SK-N-SH (cell line): ENCODE measurements at regions of chr17 and their contacts with region 1.

Region 1: DNA sequence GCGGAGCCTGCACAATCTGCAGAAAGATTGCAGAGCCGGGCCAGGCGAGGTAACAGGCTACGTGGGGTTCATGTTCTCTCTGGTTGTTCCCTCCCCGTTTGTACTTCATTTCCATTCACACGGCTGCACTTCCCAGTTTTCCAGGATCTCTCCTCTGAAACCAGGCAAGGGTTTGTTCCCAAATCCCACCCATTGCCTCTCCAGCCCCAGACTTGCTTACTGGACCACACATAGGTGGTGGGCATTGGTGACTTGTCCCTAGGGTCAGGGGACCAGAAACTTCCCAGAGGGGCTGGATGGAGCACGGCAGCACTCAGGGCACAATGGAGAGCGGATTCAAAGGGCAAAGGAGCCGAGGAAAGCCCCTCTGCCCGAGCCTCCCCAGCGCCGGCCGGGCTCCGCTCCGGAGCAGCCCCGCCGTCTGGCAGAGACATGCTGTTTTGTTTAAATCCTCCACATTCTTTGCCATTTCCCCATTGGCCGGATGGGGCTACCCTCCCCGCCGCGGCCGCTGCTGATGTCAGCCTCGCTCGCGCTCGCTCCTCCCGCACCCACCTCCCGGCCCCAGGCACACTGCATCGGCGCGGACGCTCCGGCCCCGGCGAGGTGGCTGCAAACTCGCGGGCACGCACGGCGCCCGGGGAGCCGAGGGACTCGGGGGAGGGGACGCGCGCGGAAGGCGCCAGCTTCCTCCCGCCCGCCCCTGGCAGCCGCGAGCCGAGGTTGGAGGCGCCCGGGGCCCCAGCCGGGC is at the start of gene PITPNC1:
- DNase-seq: peak; percentile 94
- H3K4me3 ChIP-seq: peak within 1 kb of the TSS; percentile 74 to 95
- H3K27ac ChIP-seq: peak within 1 kb of the TSS; percentile 97 to 98
- H3K4me1 ChIP-seq: peaks cover 16 to 21% of the 10 kb centered on the region in 2 experiments; a peak in 3 of 4 replicates
- H3K27me3 ChIP-seq: no peaks in the 10 kb centered on the region
- CTCF ChIP-seq: no peak
- EP300 ChIP-seq: no peak; a peak in 1 of 4 replicates
- RAD21 ChIP-seq: 0 out of 2 replicates have a peak, but pooled peaks have one; percentile 16
- polyA plus RNA-seq, gene PITPNC1: 14.0 and 18.4 TPM in 2 replicates

Region 2: DNA sequence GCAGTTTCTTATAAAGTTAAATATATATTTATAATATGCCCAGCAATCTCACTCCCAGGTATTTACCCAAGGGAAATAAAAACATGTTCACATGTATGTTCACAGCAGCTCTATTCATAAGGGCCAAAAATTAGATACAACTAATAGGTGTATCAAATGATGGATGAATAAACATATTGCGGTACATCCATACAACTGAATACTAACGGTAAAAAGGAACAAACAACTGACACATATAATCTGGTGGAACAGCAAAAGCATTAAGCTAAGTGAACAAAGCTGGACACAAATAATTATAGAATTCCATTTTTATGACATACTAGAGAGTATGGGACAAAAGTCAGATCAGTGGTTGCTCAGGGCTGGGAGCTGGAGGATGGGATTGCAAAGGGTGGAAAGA is 257.8 kb before region 1 on chr17:
- CTCF ChIA-PET with region 1: no interaction called
- POLR2A ChIA-PET with region 1: no interaction called
- DNase-seq: no peak
- H3K4me3 ChIP-seq: no peak overlapping the region
- H3K27ac ChIP-seq: no peak overlapping the region
- H3K4me1 ChIP-seq: peaks cover 0 to 16% of the 10 kb centered on the region in 2 experiments; a peak in 2 of 4 replicates
- H3K27me3 ChIP-seq: no peaks in the 10 kb centered on the region
- CTCF ChIP-seq: no peak
- EP300 ChIP-seq: no peak
- RAD21 ChIP-seq: no peak

Region 3: DNA sequence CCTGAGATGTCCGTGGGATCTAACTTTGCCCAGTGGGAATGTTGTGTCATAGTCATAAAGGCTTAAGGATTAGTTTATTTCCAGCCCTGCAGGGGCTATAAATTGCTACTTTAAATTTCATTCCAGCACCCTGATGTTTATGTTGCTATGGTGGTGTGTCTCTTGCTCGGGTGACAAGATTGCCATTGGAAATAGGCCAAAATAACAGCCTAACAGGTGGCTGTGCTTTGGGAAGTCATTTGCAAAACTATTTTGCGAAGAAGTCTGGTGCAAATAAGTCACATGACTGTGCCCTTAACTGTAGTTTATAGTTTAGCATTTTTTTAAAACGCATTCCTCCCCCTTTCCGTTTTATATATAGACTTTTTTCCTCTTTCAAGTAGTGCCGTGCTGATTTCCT is 23.3 kb after region 1 on chr17:
- CTCF ChIA-PET with region 1: interaction called, 11 read pairs
- POLR2A ChIA-PET with region 1: no interaction called
- DNase-seq: no peak
- H3K4me3 ChIP-seq: no peak overlapping the region
- H3K27ac ChIP-seq: no peak overlapping the region
- H3K4me1 ChIP-seq: peaks cover 6% of the 10 kb centered on the region in 2 experiments; a peak in 2 of 4 replicates
- H3K27me3 ChIP-seq: no peaks in the 10 kb centered on the region
- CTCF ChIP-seq: no peak
- EP300 ChIP-seq: no peak
- RAD21 ChIP-seq: no peak

Region 4: DNA sequence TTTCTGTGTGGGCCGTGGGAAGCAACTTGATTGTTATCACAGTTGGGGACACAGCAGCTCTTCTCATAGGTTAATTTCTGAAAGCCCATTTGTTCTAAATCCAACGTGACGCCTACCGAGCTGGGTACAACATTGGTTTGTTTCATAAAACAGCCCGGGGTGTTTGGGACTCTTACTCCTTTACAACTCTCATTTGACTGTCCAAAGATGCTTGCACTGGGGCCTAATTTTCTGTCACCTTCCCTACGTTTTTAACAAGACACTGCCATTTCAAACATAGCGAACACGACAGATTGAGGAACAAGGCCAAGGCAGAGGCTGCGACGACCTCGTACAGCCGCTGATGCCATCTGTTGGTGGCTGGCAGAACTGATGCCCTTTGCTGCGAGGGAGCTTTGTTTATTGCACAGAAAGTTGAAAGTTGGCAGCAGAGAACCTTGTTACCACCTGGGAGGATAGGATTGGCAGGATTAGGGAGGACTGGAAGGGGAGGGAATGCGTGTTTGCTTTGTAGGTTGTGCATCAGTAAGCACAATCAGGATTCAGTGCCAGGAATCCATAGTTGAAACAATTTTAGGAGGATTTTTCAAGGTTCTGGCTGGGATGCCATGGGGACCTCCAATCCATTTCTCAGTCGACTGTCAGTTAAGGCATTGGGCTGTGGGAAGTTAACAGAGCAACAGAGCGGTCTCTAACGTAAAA is 98.5 kb after region 1 on chr17:
- CTCF ChIA-PET with region 1: interaction called, 284 read pairs
- POLR2A ChIA-PET with region 1: interaction called, 13 read pairs
- DNase-seq: peak; percentile 84
- H3K4me3 ChIP-seq: no peak overlapping the region
- H3K27ac ChIP-seq: peak overlapping the region; percentile 11 to 42; a peak in 2 of 4 replicates
- H3K4me1 ChIP-seq: peaks cover 4 to 14% of the 10 kb centered on the region in 2 experiments; a peak in 3 of 4 replicates
- H3K27me3 ChIP-seq: no peaks in the 10 kb centered on the region
- CTCF ChIP-seq: peak; percentile 99
- EP300 ChIP-seq: no peak
- RAD21 ChIP-seq: peak; percentile 100

Region 5: GRCh38 chr17:67602956-67603355 is 226.0 kb after region 1 on chr17:
- CTCF ChIA-PET with region 1: interaction called, 74 read pairs
- POLR2A ChIA-PET with region 1: interaction called, 9 read pairs
- DNase-seq: peak; percentile 42
- H3K4me3 ChIP-seq: no peak overlapping the region
- H3K27ac ChIP-seq: no peak overlapping the region
- H3K4me1 ChIP-seq: peaks cover 24 to 33% of the 10 kb centered on the region in 2 experiments
- H3K27me3 ChIP-seq: no peaks in the 10 kb centered on the region
- CTCF ChIP-seq: peak; percentile 57
- EP300 ChIP-seq: no peak
- RAD21 ChIP-seq: peak; percentile 85

Region 6: GRCh38 chr17:67647482-67647881 is 270.6 kb after region 1 on chr17:
- CTCF ChIA-PET with region 1: interaction called, 13 read pairs
- POLR2A ChIA-PET with region 1: no interaction called
- DNase-seq: no peak
- H3K4me3 ChIP-seq: no peak overlapping the region
- H3K27ac ChIP-seq: no peak overlapping the region
- H3K4me1 ChIP-seq: peaks cover 0 to 7% of the 10 kb centered on the region in 2 experiments; a peak in 1 of 4 replicates
- H3K27me3 ChIP-seq: no peaks in the 10 kb centered on the region
- CTCF ChIP-seq: no peak
- EP300 ChIP-seq: no peak
- RAD21 ChIP-seq: no peak

Region 7: GRCh38 chr17:67707442-67707841 is 330.5 kb after region 1 on chr17:
- CTCF ChIA-PET with region 1: interaction called, 27 read pairs
- POLR2A ChIA-PET with region 1: no interaction called
- DNase-seq: peak; percentile 34
- H3K4me3 ChIP-seq: no peak overlapping the region
- H3K27ac ChIP-seq: peak overlapping the region in 1 of 2 experiments; percentile 16; a peak in 2 of 4 replicates
- H3K4me1 ChIP-seq: peaks cover 0 to 3% of the 10 kb centered on the region in 2 experiments; a peak in 1 of 4 replicates
- H3K27me3 ChIP-seq: no peaks in the 10 kb centered on the region
- CTCF ChIP-seq: no peak
- EP300 ChIP-seq: no peak
- RAD21 ChIP-seq: no peak